CD4-positive, alpha-beta T cell (primary cell): ENCODE measurements at regions of chr9 and their contacts with region 1.

Region 1: DNA sequence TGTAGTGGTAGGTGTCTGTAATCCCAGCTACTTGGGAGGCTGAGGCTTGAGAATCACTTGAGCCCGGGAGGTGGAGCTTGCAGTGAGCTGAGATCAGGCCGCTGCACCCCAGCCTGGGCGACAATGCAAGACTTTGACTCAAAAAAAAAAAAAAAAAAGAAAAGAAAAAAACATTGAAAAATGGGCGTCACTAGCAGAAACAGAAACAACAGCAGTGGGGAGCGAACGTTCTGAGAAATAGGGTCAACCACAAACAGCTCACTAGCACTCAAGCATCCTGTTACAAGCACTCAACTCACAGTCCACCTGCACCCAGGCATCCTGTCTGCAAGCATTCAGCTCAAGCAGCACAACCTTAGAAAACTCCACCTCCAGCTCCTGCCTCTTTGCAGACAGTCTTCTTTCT is 17.2 kb downstream of the TRIM14 start:
- DNase-seq: peak; percentile 63 to 96 (median 80)
- ATAC-seq: peak; percentile 94
- H3K4me3 ChIP-seq: peak overlapping the region; percentile 34
- H3K4me3 Mint-ChIP-seq: peak overlapping the region; percentile 71
- H3K27ac ChIP-seq: peak overlapping the region; percentile 74 to 79
- H3K27ac Mint-ChIP-seq: peak overlapping the region; percentile 91
- H3K4me1 ChIP-seq: peaks cover 95% of the 10 kb centered on the region
- H3K4me1 Mint-ChIP-seq: peaks cover 84% of the 10 kb centered on the region
- H3K27me3 ChIP-seq: no peaks in the 10 kb centered on the region
- H3K27me3 Mint-ChIP-seq: no peaks in the 10 kb centered on the region
- CTCF ChIP-seq: no peak

Region 2: GRCh38 chr9:98037357-98037756 is 64.5 kb before region 1 on chr9:
- CTCF ChIA-PET with region 1: no interaction called
- POLR2A ChIA-PET with region 1: no interaction called
- intact Hi-C with region 1: no loop called
- DNase-seq: no peak
- ATAC-seq: no peak
- H3K4me3 ChIP-seq: no peak overlapping the region
- H3K4me3 Mint-ChIP-seq: no peak overlapping the region
- H3K27ac ChIP-seq: no peak overlapping the region
- H3K27ac Mint-ChIP-seq: no peak overlapping the region
- H3K4me1 ChIP-seq: peaks cover 6% of the 10 kb centered on the region
- H3K4me1 Mint-ChIP-seq: peaks cover 5% of the 10 kb centered on the region
- H3K27me3 ChIP-seq: no peaks in the 10 kb centered on the region
- H3K27me3 Mint-ChIP-seq: no peaks in the 10 kb centered on the region
- CTCF ChIP-seq: no peak

Region 3: GRCh38 chr9:98056269-98057137 is 45.4 kb before region 1 on chr9 and contains the start of gene NANS:
- CTCF ChIA-PET with region 1: interaction called, 3 read pairs
- POLR2A ChIA-PET with region 1: interaction called, 13 read pairs
- intact Hi-C with region 1: loop called (anchors 2 to 5 kb)
- DNase-seq: peak; percentile 81 to 95 (median 88)
- ATAC-seq: peak; percentile 92
- H3K4me3 ChIP-seq: peak within 1 kb of the TSS; percentile 71
- H3K4me3 Mint-ChIP-seq: peak within 1 kb of the TSS; percentile 98
- H3K27ac ChIP-seq: peak within 1 kb of the TSS; percentile 64 to 75
- H3K27ac Mint-ChIP-seq: peak within 1 kb of the TSS; percentile 93
- H3K4me1 ChIP-seq: peaks cover 27% of the 10 kb centered on the region
- H3K4me1 Mint-ChIP-seq: peaks cover 28% of the 10 kb centered on the region
- H3K27me3 ChIP-seq: no peaks in the 10 kb centered on the region
- H3K27me3 Mint-ChIP-seq: no peaks in the 10 kb centered on the region
- CTCF ChIP-seq: no peak
- total RNA-seq, gene NANS: 70.5 to 74.0 TPM

Region 4: DNA sequence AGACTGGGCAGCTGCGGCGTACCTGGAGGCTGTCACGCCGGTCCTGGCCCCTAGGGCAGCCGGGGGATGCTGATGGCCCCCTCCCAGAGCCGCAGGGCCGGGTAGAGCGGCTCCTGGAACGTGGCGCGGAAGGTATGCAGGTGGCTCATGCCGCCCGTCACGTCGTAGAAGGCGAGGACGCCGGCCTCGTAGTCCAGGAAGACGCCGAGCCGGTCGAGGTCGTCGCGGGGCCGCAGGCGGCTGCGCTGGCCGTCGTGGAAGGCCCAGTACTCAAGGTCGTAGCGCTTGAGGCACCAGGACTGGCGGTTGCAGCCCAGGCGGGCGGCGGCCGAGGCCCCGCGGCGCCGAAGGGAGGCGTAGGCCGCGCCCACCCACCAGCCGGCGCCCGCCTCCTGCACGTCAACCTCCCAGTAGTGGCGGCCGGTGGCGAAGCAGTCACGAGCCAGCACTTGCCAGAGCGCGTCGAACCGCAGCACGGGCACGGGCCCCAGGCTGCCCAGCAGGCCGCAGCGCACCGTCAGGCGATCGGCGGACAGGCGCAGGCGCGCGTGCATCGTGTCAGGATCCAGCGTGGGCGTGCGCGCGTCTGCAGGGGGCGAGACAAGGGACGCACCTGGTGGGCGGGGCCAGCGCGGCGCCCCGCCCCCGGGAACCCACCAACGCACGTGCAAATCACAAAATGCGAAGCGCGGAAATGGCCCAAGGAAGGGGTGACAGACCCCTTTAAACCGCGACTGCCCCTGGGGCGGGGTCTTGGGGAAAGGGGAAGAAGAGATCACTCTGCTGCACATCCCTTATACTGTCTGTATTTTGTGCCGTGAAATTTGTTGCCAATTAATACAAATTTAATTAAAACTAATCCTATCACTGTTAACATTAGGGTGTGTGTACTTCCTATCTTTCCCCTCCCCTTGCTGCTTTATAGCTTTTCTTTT is 14.2 kb before region 1 on chr9:
- CTCF ChIA-PET with region 1: interaction called, 7 read pairs
- POLR2A ChIA-PET with region 1: interaction called, 18 read pairs
- intact Hi-C with region 1: no loop called
- DNase-seq: peak in 8 of 14 experiments; percentile 17 to 64 (median 40)
- ATAC-seq: peak; percentile 64
- H3K4me3 ChIP-seq: no peak overlapping the region
- H3K4me3 Mint-ChIP-seq: no peak overlapping the region
- H3K27ac ChIP-seq: no peak overlapping the region
- H3K27ac Mint-ChIP-seq: peak overlapping the region; percentile 60
- H3K4me1 ChIP-seq: peaks cover 5% of the 10 kb centered on the region
- H3K4me1 Mint-ChIP-seq: peaks cover 47% of the 10 kb centered on the region
- H3K27me3 ChIP-seq: no peaks in the 10 kb centered on the region
- H3K27me3 Mint-ChIP-seq: no peaks in the 10 kb centered on the region
- CTCF ChIP-seq: no peak

Region 5: GRCh38 chr9:98491828-98492227 is 390.0 kb after region 1 on chr9:
- CTCF ChIA-PET with region 1: no interaction called
- POLR2A ChIA-PET with region 1: no interaction called
- intact Hi-C with region 1: no loop called
- DNase-seq: no peak
- ATAC-seq: no peak
- H3K4me3 ChIP-seq: no peak overlapping the region
- H3K4me3 Mint-ChIP-seq: no peak overlapping the region
- H3K27ac ChIP-seq: no peak overlapping the region
- H3K27ac Mint-ChIP-seq: no peak overlapping the region
- H3K4me1 ChIP-seq: no peaks in the 10 kb centered on the region
- H3K4me1 Mint-ChIP-seq: no peaks in the 10 kb centered on the region
- H3K27me3 ChIP-seq: no peaks in the 10 kb centered on the region
- H3K27me3 Mint-ChIP-seq: peaks cover 30% of the 10 kb centered on the region
- CTCF ChIP-seq: no peak